Activated T-helper 2 cell treated with anti-CD3 and anti-CD28 coated beads, Interferon-gamma antibody, Interleukin-2, Interleukin-4, amounts not matched to agents 10 μg/mL and 5 μg/mL and 100 μg/mL, durations not matched to agents 14 hours and 24 hours and 36 hours (primary cell): ENCODE measurements at regions of chr5 and their contacts with region 1.

Region 1: GRCh38 chr5:150000256-150000989 is at the starts of genes HMGXB3 and TIGD6:
- DNase-seq: peak; percentile 84
- H3K4me3 Mint-ChIP-seq: peak within 1 kb of the TSS; percentile 96
- H3K27ac Mint-ChIP-seq: peak within 1 kb of the TSS; percentile 95
- H3K4me1 Mint-ChIP-seq: peaks cover 36% of the 10 kb centered on the region
- H3K27me3 Mint-ChIP-seq: no peaks in the 10 kb centered on the region
- total RNA-seq, gene HMGXB3: 39.6 and 42.2 TPM in 2 replicates
- total RNA-seq, gene TIGD6: 2.4 and 2.6 TPM in 2 replicates

Region 2: GRCh38 chr5:149345147-149345875 is 655.1 kb before region 1 on chr5 and contains the start of gene GRPEL2:
- intact Hi-C with region 1: loop called (anchors 2 kb)
- DNase-seq: peak; percentile 88
- H3K4me3 Mint-ChIP-seq: peak within 1 kb of the TSS; percentile 98
- H3K27ac Mint-ChIP-seq: peak within 1 kb of the TSS; percentile 94
- H3K4me1 Mint-ChIP-seq: peaks cover 42% of the 10 kb centered on the region
- H3K27me3 Mint-ChIP-seq: peaks cover 1% of the 10 kb centered on the region
- total RNA-seq, gene GRPEL2: 22.5 TPM in 2 replicates

Region 3: DNA sequence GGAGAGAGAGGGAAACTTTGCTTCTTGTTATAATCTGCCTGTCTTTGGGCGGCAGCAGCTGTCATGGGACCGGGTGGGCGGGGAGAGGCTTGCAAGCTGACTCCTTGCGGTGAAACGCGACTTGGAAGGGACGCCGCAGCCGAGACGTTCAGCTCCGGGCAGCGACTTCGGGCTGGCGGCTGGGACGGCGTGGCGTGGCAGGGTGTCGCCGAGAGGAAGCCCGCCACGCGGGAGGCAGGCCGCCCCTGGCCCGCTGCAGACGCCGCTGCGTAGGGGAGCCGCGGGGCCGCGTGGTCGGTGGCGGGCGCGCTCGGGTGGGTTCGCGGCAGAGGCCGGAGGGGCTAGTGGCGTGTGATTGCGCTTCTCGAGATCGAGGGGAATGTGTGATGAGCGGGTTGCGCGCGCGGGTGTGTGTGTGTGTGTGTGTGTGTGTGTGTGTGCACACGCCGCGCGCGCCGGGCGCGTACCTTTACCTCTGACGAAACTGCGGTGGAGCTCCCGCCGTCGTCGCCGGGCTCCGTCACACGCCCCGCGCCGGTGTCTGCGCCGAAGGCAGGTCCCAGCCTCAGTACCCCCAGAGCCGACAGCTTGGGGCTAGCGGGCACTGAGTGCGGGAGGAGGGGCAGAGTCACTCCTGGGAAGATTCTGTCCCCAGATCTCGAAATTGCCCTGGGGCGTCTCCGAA is 268.6 kb before region 1 on chr5:
- intact Hi-C with region 1: loop called (anchors 2 kb)
- DNase-seq: peak; percentile 44
- H3K4me3 Mint-ChIP-seq: peak overlapping the region; percentile 82
- H3K27ac Mint-ChIP-seq: no peak overlapping the region
- H3K4me1 Mint-ChIP-seq: peaks cover 2% of the 10 kb centered on the region
- H3K27me3 Mint-ChIP-seq: peaks cover 15% of the 10 kb centered on the region

Region 4: GRCh38 chr5:150066901-150067396 is 66.5 kb after region 1 on chr5:
- intact Hi-C with region 1: loop called (anchors 5 kb)
- DNase-seq: no peak
- H3K4me3 Mint-ChIP-seq: no peak overlapping the region
- H3K27ac Mint-ChIP-seq: peak overlapping the region; percentile 46
- H3K4me1 Mint-ChIP-seq: peaks cover 22% of the 10 kb centered on the region
- H3K27me3 Mint-ChIP-seq: peaks cover 1% of the 10 kb centered on the region

Region 5: GRCh38 chr5:150412319-150413175 is 412.1 kb after region 1 on chr5 and contains the start of gene CD74:
- intact Hi-C with region 1: loop called (anchors 2 kb)
- DNase-seq: peak; percentile 90
- H3K4me3 Mint-ChIP-seq: peak within 1 kb of the TSS; percentile 88
- H3K27ac Mint-ChIP-seq: peak within 1 kb of the TSS; percentile 94
- H3K4me1 Mint-ChIP-seq: peaks cover 27% of the 10 kb centered on the region
- H3K27me3 Mint-ChIP-seq: no peaks in the 10 kb centered on the region
- total RNA-seq, gene CD74: 445 and 452 TPM in 2 replicates